GM10248 (cell line): ENCODE measurements at regions of chr5 and their contacts with region 1.

Region 1: DNA sequence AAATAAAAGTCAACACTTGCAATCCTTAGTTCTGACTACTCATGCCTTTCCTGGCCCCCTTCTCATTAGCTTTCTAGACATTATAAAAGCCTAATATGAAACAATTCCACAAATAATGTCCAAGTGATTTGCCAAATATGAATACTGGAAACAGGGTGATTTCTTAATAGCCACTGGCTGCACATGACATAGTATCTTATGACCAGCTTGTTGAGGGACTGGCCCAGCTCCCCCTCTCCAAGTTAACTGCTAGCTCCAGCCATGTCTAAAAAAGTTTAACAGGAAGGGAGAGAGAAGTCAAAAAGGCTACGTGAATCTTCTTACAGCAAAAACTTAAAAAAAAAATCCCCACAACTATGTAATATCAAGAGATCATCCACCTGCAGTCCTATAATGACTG is 1.5 kb downstream of the CERT1 start:
- DNase-seq: no peak
- CTCF ChIP-seq: no peak

Region 2: DNA sequence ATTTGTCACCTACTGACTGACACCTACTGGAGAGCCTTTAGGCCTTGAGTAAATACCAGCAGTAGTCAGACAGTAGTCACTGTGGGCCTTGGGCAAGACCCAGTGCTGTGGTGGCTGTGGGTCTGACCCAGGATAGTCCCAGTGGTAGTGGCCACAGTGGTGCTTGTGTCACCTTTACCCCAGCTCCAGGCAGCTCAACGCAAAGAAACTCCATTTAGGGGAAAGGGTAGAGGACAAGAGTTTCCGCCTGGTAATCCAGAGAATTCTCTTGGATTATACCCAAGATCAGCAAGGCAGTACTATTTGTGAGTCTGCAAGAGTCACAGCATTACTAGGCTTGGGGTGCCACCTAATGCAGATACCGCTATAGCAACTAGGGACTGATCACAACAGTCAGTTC is 27.5 kb before region 1 on chr5:
- CTCF ChIA-PET with region 1: no interaction called
- POLR2A ChIA-PET with region 1: no interaction called
- DNase-seq: no peak
- CTCF ChIP-seq: no peak

Region 3: DNA sequence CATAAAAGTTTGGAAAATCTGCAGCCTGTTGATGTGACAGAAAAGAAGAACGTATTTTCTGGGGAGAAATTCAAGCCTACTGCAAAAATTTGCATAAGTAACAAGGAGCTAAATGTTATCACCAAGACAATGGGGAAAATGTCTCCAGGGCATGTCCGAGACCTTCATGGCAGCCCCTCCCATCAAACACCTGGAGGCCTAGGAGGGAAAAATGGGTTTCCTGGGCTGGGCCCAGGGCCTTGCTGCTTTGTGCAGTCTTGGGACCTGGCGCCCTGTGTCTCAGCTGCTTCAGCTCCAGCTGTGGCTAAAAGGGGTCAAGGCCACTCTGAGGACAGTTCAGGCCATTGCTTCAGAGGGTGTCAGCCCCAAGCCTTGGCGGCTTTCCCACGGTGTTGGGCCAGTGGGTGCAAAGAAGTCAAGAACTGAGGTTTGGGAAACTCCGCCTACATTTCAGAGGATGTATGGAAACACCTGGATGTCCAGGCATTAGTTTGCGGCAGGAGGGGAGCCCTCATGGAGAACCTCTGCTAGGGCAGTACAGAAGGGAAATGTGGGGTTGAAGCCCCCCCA is 11.7 kb before region 1 on chr5:
- CTCF ChIA-PET with region 1: interaction called, 11 read pairs
- POLR2A ChIA-PET with region 1: no interaction called
- DNase-seq: no peak
- CTCF ChIP-seq: no peak